Activated CD4-positive, alpha-beta T cell treated with anti-CD3 and anti-CD28 coated beads, Interleukin-2, amount 10 ng/mL, durations not matched to agents 24 days and 14 days (primary cell): ENCODE measurements at regions of chr6 and their contacts with region 1.

Region 1: DNA sequence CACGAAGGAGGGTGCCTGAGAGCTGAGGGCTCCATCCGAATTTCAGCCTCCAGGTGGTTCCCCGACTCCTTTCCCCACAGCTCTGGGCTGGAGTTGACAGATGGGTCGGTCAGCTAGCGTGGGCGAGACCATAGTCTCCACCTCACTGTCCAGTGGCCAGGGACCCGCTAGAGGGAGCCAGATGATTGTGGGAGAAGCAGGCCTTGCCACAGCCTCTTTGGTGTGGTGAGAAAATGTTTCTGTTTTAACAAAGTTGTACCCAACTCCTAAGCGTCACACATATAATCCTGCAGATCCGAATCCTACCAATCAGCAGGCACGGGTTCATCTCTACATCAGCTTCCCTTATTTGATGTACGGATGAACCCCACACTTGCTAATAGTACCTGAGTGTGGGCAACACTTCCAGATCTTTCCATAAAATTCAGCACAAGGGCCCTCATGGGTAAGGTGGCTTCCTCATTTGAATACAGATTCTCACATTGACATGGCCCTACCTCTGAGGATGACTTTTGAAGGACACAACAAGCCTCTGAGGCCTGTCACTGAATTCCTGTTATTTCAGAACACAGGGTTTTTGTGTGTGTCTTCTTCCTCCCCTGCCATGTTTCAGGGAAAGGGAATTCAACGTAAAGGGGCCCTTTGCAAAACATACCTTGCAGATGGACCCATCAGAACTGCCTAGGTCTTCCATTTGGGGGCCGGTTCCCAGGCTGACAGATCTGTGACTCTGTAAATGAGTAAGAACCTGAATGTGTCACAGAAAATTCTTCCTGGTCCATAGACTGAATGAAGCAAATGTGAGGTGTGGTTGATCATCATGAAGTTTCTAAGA is 103.2 kb upstream of the DUSP22 start:
- DNase-seq: peak; percentile 95
- H3K4me3 Mint-ChIP-seq: peak overlapping the region; percentile 60
- H3K27ac Mint-ChIP-seq: peak overlapping the region; percentile 91
- H3K4me1 Mint-ChIP-seq: peaks cover 48% of the 10 kb centered on the region
- H3K27me3 Mint-ChIP-seq: no peaks in the 10 kb centered on the region

Region 2: GRCh38 chr6:168865-169455 is 20.1 kb before region 1 on chr6:
- intact Hi-C with region 1: no loop called
- DNase-seq: no peak
- H3K4me3 Mint-ChIP-seq: no peak overlapping the region
- H3K27ac Mint-ChIP-seq: no peak overlapping the region
- H3K4me1 Mint-ChIP-seq: peaks cover 2% of the 10 kb centered on the region
- H3K27me3 Mint-ChIP-seq: peaks cover 27% of the 10 kb centered on the region

Region 3: DNA sequence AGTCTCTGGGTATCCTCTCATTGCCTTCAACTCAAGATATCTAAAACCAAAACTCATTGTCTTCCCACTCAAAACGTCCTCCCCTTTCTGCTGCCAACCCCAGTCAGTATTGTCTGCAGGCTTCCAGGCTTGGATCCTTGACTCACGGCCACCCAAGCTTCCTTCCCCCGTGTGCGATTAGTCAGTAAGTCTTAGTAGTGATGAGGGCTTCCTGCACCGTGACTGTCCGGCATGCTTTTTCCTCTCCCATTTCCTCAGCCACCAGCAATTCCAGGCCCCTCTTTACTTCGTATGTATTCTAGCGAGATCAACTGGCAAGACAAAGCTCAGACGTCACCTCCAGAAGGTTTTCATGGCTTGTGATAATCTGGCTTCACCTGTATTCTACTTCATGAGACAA is 14.6 kb after region 1 on chr6:
- intact Hi-C with region 1: no loop called
- DNase-seq: no peak
- H3K4me3 Mint-ChIP-seq: no peak overlapping the region
- H3K27ac Mint-ChIP-seq: no peak overlapping the region
- H3K4me1 Mint-ChIP-seq: peaks cover 6% of the 10 kb centered on the region
- H3K27me3 Mint-ChIP-seq: peaks cover 12% of the 10 kb centered on the region

Region 4: DNA sequence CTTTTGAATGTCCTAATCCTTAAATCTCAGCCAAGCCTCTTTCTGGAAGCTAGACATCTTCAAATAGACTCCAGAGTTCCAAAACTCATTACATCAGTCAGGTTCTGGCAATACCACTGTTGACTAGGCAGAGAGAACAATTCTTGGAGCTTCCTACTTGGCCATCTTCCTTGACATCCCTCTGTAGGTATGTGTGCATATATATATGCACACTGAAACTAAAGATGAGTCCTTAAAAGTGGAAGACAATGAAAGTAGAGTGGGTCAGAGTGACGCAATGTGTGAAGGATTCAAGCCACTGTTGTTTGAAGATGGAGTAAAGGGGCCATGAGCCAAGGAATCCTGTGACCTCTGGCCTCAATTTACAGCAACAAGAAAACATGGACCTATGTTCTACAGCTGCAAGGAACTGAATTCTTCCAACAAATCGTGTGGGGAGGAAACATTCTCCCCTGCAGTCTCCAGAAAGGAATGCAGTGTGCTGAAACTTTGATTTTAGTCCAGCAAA is 84.6 kb after region 1 on chr6:
- intact Hi-C with region 1: loop called (anchors 5 kb)
- DNase-seq: peak; percentile 38
- H3K4me3 Mint-ChIP-seq: no peak overlapping the region
- H3K27ac Mint-ChIP-seq: no peak overlapping the region
- H3K4me1 Mint-ChIP-seq: peaks cover 15% of the 10 kb centered on the region
- H3K27me3 Mint-ChIP-seq: peaks cover 11% of the 10 kb centered on the region

Region 5: DNA sequence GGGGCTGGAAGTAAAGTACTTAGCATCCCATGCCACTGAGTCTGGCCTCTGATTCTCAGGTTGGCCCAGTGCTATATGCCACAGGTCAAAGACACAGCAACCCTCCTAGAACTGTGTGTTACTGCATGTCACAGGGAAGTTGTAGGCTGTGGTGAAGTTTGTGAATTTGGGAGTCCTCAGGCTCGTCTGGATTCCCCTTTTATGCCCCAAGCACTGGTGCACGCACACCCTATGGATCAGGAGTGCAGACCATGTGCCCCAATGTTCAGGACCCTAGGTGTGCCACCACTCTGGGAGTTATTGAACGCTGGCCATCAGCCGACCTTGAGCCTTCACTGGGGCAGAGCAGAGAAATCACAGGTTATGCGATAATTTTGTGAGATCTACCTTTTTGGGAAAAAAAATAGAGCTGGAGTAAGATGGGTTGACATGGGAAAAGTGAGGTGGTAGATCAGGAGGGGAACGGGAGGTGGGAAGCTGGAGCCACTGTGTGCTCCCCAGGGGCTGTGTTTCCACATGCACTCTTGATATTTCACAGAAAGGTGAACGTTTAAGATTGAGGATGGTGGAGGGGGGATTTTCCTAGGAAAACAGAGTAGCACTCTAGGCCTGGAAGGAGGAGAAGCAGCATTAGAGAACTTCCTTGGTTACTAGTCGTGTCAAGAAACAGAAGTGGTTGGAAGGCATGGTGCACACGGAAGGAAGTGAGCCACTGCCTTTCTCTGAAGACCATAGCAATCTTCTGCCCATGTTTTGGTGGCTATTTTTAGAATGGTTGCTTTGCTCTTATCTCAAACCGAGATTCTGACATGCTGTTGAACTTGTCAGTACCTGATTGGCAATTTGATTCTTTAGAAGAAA is 147.4 kb after region 1 on chr6:
- intact Hi-C with region 1: loop called (anchors 1 kb)
- DNase-seq: peak; percentile 71
- H3K4me3 Mint-ChIP-seq: peak overlapping the region; percentile 65
- H3K27ac Mint-ChIP-seq: peak overlapping the region; percentile 75
- H3K4me1 Mint-ChIP-seq: peaks cover 45% of the 10 kb centered on the region
- H3K27me3 Mint-ChIP-seq: no peaks in the 10 kb centered on the region

Region 6: GRCh38 chr6:498795-499231 is 309.8 kb after region 1 on chr6:
- intact Hi-C with region 1: loop called (anchors 2 kb)
- DNase-seq: peak; percentile 88
- H3K4me3 Mint-ChIP-seq: peak overlapping the region; percentile 78
- H3K27ac Mint-ChIP-seq: peak overlapping the region; percentile 92
- H3K4me1 Mint-ChIP-seq: peaks cover 73% of the 10 kb centered on the region
- H3K27me3 Mint-ChIP-seq: no peaks in the 10 kb centered on the region

Region 7: GRCh38 chr6:579339-579738 is 390.3 kb after region 1 on chr6:
- intact Hi-C with region 1: loop called (anchors 5 kb)
- DNase-seq: no peak
- H3K4me3 Mint-ChIP-seq: no peak overlapping the region
- H3K27ac Mint-ChIP-seq: no peak overlapping the region
- H3K4me1 Mint-ChIP-seq: peaks cover 26% of the 10 kb centered on the region
- H3K27me3 Mint-ChIP-seq: no peaks in the 10 kb centered on the region

Region 8: GRCh38 chr6:710601-711571 is 521.8 kb after region 1 on chr6:
- intact Hi-C with region 1: loop called (anchors 5 kb)
- DNase-seq: peak; percentile 91
- H3K4me3 Mint-ChIP-seq: peak overlapping the region; percentile 98
- H3K27ac Mint-ChIP-seq: peak overlapping the region; percentile 100
- H3K4me1 Mint-ChIP-seq: peaks cover 43% of the 10 kb centered on the region
- H3K27me3 Mint-ChIP-seq: no peaks in the 10 kb centered on the region